AG04449 (cell line): ENCODE measurements at regions of chr11 and their contacts with region 1.

Region 1: GRCh38 chr11:122101625-122102291 is 14.3 kb downstream of the BLID start:
- DNase-seq: no peak
- H3K4me3 ChIP-seq: peak overlapping the region; percentile 82
- CTCF ChIP-seq: peak; percentile 72

Region 2: DNA sequence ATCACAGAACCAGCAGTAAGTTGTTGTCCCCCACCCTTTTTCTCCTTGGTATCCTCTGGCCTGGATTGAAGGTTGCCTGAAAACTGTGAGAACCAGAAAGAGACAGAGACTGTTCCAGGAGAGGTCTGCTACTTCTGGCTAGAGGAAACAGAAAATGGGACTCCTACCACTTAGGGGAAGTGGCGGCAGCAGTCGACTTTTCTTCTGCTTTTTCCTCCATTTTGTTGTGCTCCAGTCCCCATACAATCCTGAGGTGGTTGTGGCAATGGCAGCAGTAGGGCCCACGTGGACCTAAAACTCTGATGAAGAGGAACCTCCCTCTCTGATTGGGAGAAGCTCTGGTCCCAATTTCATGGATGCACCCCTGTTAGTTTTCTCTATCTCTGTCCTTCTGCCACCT is 725.6 kb before region 1 on chr11:
- CTCF ChIA-PET with region 1: no interaction called
- POLR2A ChIA-PET with region 1: no interaction called
- DNase-seq: no peak
- H3K4me3 ChIP-seq: no peak overlapping the region
- CTCF ChIP-seq: no peak

Region 3: DNA sequence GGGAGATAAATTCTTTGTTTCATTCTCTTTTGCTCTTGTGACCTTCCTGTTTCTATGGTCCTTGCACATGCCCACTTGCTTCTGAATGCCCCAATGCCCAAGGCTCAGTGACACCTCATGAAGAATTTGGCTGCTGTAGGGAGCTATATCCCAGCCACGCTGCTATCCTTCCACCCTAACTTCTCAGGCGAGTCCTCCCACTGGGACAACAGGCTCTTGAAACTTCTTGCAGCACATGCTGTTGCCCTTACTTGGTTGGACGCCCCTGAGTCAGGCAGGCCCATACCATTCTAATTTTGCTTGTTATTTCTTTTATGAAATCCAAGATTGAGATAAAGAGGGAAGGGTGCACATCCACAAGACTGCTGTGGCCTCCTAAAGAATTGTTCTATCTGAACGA is 71.8 kb after region 1 on chr11:
- CTCF ChIA-PET with region 1: interaction called, 3 read pairs
- POLR2A ChIA-PET with region 1: interaction called, 25 read pairs
- DNase-seq: no peak
- H3K4me3 ChIP-seq: no peak overlapping the region
- CTCF ChIP-seq: no peak

Region 4: DNA sequence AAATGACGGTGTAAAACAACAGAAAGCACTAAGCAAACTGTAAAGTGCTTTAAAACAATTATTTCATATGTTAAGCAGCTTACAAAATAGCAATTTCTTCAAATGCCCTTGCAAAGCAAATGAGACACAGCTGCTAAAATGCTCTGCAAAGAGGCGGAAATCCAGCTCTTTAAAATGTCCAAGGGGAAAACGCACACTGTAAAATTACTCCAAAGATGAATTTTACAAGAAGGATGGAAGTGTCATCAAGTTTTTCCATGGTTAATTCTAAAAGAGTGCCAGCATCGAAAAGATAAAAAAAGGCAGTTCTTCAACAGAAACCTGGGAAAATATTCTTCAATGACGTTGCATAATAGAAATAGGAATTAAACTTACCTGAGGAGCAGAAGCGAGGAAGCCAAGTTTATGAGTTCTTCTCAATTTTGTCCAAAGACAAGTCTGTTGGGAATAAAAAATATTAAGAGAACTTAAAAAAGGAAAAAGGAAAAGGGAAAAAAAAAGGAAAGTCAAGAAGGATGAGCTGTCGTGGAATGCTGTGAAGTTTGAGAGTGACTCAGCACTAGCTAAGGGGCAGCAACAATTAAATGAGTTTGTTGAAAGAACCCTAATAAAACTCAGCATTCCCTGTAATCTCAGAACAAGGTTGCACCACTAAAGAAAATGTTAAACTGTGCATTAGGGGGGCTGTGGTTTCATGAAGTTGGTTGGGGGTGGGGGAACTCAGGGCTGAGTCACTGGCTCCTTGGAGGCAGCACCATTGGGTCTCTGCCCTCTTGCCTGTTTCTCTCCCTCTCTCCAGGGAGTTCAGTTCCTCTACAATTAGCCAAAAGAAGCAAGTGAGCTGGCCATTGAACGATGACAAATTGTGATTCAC is 78.4 kb after region 1 on chr11:
- CTCF ChIA-PET with region 1: interaction called, 4 read pairs
- POLR2A ChIA-PET with region 1: interaction called, 25 read pairs
- DNase-seq: peak; percentile 95
- H3K4me3 ChIP-seq: peak overlapping the region; percentile 59
- CTCF ChIP-seq: no peak

Region 5: DNA sequence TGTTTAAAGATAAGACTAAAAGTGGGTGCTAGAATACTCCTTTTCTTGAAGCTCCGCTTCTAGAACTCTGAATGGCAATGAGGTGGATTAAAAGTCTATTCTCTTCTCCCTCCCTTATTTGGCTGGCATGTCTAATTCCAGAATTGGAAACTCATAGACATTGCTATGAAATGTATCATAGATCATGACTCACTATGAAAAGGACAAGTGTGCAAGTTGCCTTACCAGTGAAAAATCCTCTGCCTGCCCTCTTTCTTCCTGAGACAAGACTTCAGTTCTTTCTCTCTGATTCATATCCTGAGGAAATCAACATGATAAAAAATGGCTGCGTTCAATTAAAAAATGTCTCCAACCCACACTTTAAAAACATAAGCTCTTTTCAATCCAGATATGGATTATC is 87.5 kb after region 1 on chr11:
- CTCF ChIA-PET with region 1: interaction called, 4 read pairs
- POLR2A ChIA-PET with region 1: interaction called, 12 read pairs
- DNase-seq: peak; percentile 96
- H3K4me3 ChIP-seq: no peak overlapping the region
- CTCF ChIP-seq: no peak

Region 6: DNA sequence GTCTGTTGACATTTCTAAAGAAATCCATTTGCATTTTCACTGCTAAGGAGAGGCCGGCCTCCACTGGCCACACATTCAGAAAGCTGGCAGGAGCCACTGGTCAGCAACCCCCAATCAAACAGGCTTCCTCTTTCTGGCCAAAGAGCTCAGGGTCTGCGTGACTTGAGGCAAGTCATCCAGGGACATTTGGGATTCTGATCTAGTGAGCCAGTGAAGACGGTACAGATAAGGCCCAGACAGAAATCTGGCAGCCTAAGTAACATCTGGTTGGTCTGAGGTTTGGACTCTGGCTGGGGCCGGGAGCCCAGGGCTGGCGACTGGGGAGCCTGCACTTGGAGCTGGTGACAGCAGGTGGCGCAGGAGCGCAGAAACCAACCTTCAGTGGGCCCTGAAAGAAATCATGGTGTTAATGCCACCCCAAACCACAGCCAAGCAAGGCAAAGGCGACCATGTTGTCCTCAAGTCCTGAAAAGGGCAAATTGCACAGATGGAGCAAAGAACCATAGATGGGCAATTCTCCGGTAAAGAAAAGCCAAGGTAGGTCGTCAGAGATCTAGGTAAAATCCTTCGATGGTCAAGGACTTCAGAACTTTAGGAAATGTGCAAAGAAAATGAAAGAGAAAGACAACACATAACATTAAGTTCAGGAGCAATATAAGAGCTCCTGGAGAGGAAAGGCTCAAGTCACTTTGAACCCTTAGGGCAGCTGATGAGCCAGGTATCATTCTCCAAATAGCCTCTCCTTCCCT is 113.7 kb after region 1 on chr11:
- CTCF ChIA-PET with region 1: interaction called, 22 read pairs
- POLR2A ChIA-PET with region 1: interaction called, 5 read pairs
- DNase-seq: peak; percentile 96
- H3K4me3 ChIP-seq: no peak overlapping the region
- CTCF ChIP-seq: peak; percentile 92

Region 7: GRCh38 chr11:122287401-122287800 is 185.6 kb after region 1 on chr11:
- CTCF ChIA-PET with region 1: no interaction called
- POLR2A ChIA-PET with region 1: no interaction called
- DNase-seq: no peak
- H3K4me3 ChIP-seq: no peak overlapping the region
- CTCF ChIP-seq: no peak